Pancreas (tissue), 10 donors: ENCODE measurements at regions of chr2 and their contacts with region 1.

Region 1: GRCh38 chr2:15939854-15940660 is at the start of gene MYCN:
- DNase-seq: peak in 1 of 6 donors; percentile 68
- ATAC-seq: peak; percentile 38 to 56 (median 44)
- H3K4me3 ChIP-seq: peak within 1 kb of the TSS; percentile 0 to 50 (median 18)
- H3K27ac ChIP-seq: no peak within 1 kb of the TSS
- H3K4me1 ChIP-seq: peaks cover 0 to 16% (median 4%) of the 10 kb centered on the region in 3 donors
- H3K27me3 ChIP-seq: peaks cover 0 to 19% (median 0%) of the 10 kb centered on the region in 4 donors
- CTCF ChIP-seq: peak in 1 of 4 donors; percentile 56
- total RNA-seq, gene MYCN: 0.09 to 0.37 (median 0.17) TPM

Region 2: DNA sequence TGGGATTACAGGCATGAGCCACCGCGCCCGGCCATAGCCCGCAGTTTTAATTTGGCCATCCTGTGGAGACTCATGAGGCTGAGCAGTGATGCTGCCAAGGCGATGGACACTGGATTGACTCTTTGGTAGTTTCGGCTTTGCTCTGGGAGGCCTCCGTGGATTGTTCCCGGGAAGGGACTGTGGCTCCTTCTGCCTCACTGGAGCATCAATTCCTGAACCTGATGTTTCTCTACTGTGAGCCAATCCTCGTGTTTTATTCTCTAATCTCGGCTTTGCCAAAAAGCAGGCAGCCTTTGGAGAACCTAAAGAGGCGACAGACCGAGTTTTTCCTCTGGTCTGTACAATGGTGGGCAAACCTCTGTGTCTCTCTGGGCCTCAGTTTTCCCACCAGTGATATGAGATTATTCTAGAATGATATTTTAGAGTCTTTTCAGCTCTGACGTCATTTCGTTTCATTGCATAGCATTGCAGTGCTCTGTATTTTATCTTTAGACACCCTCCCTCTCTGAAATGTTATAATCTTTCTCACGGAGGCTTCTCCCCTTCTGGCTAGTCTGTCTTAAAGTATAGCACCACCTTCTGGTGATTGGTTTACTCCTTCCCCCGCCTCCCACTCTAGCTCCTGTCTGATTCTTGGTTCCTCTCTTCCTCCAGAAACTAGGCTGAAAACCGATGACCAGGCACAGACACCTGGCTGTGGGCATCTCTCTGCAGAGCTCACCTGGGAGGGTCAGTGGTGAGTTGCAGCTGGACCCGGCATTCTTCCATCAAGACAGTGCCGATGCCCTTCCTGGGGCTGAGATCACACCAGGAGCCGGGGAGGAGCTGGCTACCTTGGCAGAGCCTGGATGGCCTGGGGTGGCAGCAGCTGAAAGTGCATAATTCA is 341.6 kb after region 1 on chr2:
- intact Hi-C with region 1: loop called in 1 of 3 experiments (anchors 5 kb)
- DNase-seq: peak in 1 of 6 donors; percentile 21
- ATAC-seq: peak in 3 of 4 donors; percentile 74 to 86 (median 79)
- H3K4me3 ChIP-seq: no peak overlapping the region
- H3K27ac ChIP-seq: no peak overlapping the region
- H3K4me1 ChIP-seq: no peaks in the 10 kb centered on the region
- H3K27me3 ChIP-seq: no peaks in the 10 kb centered on the region
- CTCF ChIP-seq: peak in 2 of 4 donors; percentile 25 to 27

Region 3: DNA sequence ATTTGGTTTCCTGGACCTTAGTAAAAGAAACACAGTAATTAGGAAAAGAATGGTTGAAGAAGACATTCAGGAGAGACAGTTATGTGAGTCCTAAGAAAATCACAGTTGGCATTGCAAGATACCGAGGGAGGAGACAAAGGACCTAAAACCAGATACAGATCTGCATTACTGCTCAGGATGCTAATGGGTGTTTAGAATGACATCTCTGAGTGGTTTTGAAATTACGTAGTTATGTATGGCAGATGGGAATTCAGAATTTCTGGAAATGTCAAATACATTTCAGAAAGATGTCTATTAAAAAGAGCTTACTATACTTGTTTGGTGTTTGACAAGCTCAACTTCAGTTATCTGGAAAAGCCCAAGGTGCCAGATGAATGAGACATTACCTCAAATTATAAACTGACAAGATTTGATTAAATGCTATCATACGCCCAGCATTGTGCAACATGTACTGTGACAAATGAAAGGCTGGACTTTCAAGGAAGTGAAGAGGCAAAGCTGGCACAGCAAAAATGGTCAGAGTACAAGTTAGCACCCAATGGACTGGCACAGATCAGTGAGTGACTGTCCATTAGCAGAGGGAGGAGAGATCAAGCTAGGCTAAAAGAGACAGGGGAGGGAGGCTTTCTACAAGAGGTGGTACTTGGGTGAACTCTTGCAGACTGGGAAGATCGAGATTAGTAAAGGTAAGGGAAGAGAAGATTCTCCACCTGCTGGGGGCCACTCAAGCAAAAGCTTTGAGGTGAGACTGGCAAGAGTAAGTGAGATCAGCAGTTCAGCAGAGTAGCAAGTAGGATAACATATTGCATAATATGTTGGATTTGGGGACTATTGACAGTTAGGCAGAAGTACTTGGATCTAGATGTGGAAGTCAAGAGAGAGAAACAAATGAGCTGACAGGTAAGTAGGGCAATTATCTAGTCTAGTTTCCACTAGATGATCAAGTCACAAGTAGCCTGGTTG is 556.6 kb after region 1 on chr2:
- intact Hi-C with region 1: loop called in 2 of 3 experiments (anchors 5 to 10 kb)
- DNase-seq: no peak
- ATAC-seq: peak in 3 of 4 donors; percentile 38 to 74 (median 71)
- H3K4me3 ChIP-seq: no peak overlapping the region
- H3K27ac ChIP-seq: no peak overlapping the region
- H3K4me1 ChIP-seq: no peaks in the 10 kb centered on the region
- H3K27me3 ChIP-seq: no peaks in the 10 kb centered on the region
- CTCF ChIP-seq: no peak

Region 4: DNA sequence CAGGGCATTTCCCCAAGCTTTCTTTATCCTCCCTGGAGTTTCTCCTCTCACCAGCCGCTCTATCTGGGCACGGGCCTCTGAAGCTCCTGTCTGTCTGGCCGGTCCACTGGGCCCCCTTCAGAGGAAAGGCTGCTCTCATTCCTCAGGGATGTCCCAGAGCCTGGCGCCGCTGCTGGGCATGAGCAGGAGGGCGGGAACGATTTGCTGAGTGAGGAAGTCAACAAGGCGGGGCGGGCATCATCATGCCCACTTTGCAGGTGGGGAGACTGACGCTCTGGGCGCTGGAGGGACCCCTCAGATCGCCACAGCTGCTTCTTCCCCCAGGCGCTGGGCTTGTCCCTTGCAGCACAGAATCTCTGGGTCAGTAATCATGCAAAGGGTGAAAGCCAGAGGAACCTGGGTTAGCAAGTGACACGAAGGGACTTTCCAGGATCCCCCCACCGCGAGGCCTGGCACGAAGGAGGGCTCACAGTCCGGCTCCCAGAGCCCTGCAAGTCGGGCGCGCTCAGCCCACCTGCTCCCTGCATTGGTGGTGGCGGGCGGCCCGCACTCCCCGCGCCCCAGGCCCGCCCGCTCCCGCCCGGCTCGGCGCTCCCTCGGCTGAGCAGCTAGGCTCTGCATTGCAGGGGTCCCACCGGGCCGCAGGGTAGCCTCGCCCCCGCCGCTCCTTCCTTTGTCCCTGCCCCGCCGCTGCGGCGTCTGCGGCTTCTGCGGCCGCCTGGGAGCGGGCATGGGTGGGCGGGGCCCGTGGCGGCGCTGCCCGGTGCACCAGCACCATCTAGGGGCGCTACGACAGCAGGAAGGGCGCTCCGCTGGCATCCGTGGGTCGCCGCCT is 567.8 kb after region 1 on chr2:
- intact Hi-C with region 1: loop called in 1 of 3 experiments (anchors 10 kb)
- DNase-seq: peak; percentile 24 to 84 (median 66)
- ATAC-seq: peak; percentile 93 to 99 (median 97)
- H3K4me3 ChIP-seq: peak overlapping the region; percentile 3 to 54 (median 26)
- H3K27ac ChIP-seq: no peak overlapping the region
- H3K4me1 ChIP-seq: no peaks in the 10 kb centered on the region
- H3K27me3 ChIP-seq: peaks cover 0 to 13% (median 0%) of the 10 kb centered on the region in 4 donors
- CTCF ChIP-seq: peak; percentile 37 to 75 (median 67)

Region 5: GRCh38 chr2:16608661-16609643 is 668.9 kb after region 1 on chr2:
- intact Hi-C with region 1: loop called in 1 of 3 experiments (anchors 10 kb)
- DNase-seq: peak; percentile 60 to 94 (median 80)
- ATAC-seq: peak; percentile 86 to 98 (median 96)
- H3K4me3 ChIP-seq: peak overlapping the region in 3 of 4 donors; percentile 4 to 43 (median 27)
- H3K27ac ChIP-seq: peak overlapping the region in 1 of 4 donors; percentile 9
- H3K4me1 ChIP-seq: no peaks in the 10 kb centered on the region
- H3K27me3 ChIP-seq: no peaks in the 10 kb centered on the region
- CTCF ChIP-seq: peak; percentile 83 to 91 (median 90)